Activated naive CD4-positive, alpha-beta T cell treated with anti-CD3 and anti-CD28 coated beads, Interleukin-2, amount 10 ng/mL, durations not matched to agents 7 days and 5 days (primary cell): ENCODE measurements at regions of chr6 and their contacts with region 1.

Region 1: GRCh38 chr6:154928325-154928922 is 66.7 kb upstream of the TIAM2 start:
- DNase-seq: peak; percentile 78
- H3K4me3 Mint-ChIP-seq: no peak overlapping the region
- H3K27ac Mint-ChIP-seq: no peak overlapping the region
- H3K4me1 Mint-ChIP-seq: peaks cover 6% of the 10 kb centered on the region
- H3K27me3 Mint-ChIP-seq: no peaks in the 10 kb centered on the region

Region 2: DNA sequence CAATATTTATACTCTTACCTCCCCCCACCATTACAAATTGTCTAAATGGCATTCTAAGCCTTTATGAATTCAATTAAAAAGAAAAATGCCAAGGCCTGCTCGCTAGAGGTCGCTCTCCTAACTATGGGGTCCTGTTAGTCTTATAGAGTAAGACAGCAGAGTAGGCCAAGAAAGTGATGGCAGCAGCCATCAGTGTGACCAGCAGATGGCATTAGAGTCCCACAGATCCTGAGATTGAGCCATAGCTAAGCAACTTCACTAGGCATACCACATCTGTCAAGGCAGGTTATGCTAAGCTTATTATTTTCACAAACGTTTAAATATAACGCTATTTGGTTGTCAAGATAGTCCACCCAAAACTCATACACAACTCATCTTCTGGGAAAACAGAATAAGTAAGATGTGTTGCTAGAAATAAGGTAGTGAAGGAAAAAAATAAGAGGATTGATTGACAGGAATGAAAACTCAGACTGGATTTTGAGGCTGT is 252.8 kb before region 1 on chr6:
- CTCF ChIA-PET with region 1: interaction called, 23 read pairs
- DNase-seq: peak; percentile 93
- H3K4me3 Mint-ChIP-seq: no peak overlapping the region
- H3K27ac Mint-ChIP-seq: no peak overlapping the region
- H3K4me1 Mint-ChIP-seq: no peaks in the 10 kb centered on the region
- H3K27me3 Mint-ChIP-seq: peaks cover 5% of the 10 kb centered on the region

Region 3: DNA sequence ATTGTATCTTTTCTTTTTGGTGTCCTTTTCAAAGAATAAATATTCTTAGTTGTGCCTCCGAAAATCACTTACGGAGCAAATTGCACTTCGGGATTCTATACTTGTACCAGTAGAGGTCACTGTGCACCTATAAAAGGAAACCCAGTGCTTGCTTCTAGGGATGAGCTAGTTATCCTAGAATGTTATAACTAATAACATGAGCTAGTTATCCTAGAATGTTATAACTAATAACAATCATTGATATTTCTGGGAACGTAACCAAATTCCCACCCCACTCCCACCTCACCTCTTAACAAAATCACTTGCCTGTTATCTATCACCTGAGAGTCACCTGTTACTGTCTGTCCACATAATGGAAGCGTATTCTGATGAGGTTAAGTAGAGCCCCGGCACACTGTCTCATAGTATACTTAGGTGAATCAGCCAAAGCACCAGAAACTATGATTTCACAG is 60.3 kb before region 1 on chr6:
- CTCF ChIA-PET with region 1: interaction called, 10 read pairs
- DNase-seq: no peak
- H3K4me3 Mint-ChIP-seq: no peak overlapping the region
- H3K27ac Mint-ChIP-seq: no peak overlapping the region
- H3K4me1 Mint-ChIP-seq: peaks cover 10% of the 10 kb centered on the region
- H3K27me3 Mint-ChIP-seq: no peaks in the 10 kb centered on the region

Region 4: GRCh38 chr6:154951345-154952200 is 23.1 kb after region 1 on chr6:
- CTCF ChIA-PET with region 1: interaction called, 10 read pairs
- DNase-seq: peak; percentile 49
- H3K4me3 Mint-ChIP-seq: no peak overlapping the region
- H3K27ac Mint-ChIP-seq: peak overlapping the region; percentile 73
- H3K4me1 Mint-ChIP-seq: peaks cover 24% of the 10 kb centered on the region
- H3K27me3 Mint-ChIP-seq: no peaks in the 10 kb centered on the region

Region 5: DNA sequence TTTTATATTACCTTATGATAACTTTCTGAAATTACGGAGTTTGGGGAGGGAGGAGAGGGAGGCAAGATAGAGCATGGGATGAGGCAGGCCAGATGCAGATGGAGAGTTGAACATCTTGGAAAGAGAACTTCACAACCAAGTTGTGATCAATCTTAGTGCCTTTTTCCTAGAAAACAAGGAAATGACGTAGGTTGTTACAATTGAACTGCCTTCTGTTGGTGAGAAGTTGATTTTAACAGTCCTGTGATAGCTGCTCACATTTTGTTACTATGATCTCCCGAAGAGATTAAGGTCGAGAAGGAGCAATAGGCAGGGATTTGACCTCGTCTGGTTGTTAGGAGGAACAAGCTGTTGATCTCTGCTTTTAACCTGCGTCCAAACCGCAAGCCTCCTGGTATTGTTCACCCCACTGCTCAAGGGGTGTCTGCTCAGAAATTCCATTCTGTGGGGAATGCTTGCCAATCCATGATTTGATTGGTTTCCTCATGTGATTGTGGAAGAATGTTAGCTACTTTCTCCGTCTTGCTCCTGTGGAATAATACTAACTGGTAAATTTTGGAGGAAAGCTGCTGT is 101.8 kb after region 1 on chr6:
- CTCF ChIA-PET with region 1: no interaction called
- DNase-seq: no peak
- H3K4me3 Mint-ChIP-seq: no peak overlapping the region
- H3K27ac Mint-ChIP-seq: no peak overlapping the region
- H3K4me1 Mint-ChIP-seq: no peaks in the 10 kb centered on the region
- H3K27me3 Mint-ChIP-seq: no peaks in the 10 kb centered on the region

Region 6: DNA sequence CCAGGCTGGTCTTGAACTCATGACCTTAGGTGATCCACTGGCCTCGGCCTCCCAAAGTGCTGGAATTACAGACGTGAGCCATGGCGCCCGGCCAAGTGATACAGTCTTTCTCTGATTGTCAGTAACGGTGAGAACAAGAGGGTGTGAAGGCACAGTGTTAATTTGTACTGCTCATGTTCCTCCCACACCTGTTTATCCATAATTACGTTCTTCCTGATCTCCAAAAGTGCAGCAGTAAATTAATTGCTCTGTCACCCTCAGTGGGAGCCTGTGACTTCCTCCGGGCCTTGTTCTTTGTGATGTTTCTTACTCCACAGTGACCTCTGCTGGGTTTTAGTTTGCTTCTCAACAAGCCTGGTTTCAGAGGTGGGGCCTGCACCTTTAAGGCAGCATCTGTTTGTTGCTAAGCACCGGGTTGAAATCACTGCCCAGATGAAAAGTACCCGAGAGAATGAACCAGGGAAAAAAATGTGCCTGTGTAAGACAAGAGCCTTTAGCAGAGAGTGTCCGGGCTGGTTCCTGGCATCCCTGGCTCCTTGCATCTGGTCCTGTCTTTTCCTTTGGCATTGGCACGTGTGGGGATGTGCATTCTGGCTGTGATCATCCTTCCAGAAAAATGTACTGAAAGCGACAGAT is 246.3 kb after region 1 on chr6:
- CTCF ChIA-PET with region 1: interaction called, 86 read pairs
- DNase-seq: peak; percentile 76
- H3K4me3 Mint-ChIP-seq: no peak overlapping the region
- H3K27ac Mint-ChIP-seq: peak overlapping the region; percentile 47
- H3K4me1 Mint-ChIP-seq: peaks cover 52% of the 10 kb centered on the region
- H3K27me3 Mint-ChIP-seq: no peaks in the 10 kb centered on the region

Region 7: DNA sequence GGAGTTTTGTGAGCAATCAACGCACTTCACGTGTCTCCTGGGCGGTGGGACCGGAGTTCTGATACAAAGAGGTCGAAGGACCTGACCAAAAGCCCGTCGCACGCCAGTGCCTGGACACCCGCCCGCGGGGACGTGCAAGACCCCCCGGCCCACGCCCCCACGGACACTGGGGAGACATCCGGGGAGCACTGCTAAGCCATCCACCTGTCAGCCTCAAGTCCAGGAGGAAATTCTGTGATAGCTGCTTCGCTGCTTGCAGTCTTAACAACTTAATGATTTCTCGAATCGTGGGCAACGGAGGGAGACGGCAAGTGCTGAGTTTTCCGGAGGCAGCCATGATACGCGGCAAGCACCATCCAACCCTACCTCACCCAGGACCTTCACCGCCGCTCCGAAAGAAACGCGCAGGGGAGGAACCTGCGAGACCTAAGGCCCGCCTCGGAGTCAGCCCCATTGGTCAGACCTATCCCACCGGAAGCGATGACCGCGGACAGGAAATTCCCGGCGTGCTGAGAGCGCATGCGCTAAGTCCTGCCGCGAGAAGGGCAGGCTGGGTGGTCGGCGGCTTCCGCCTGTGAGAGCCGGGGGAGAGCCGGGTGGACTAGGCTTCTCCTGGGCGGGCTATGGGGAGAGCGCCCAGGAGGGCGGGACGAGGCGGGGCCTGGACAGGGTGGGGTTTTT is 385.8 kb after region 1 on chr6 and contains the start of gene TFB1M:
- CTCF ChIA-PET with region 1: interaction called, 23 read pairs
- DNase-seq: peak; percentile 99
- H3K4me3 Mint-ChIP-seq: peak within 1 kb of the TSS; percentile 98
- H3K27ac Mint-ChIP-seq: peak within 1 kb of the TSS; percentile 95
- H3K4me1 Mint-ChIP-seq: peaks cover 43% of the 10 kb centered on the region
- H3K27me3 Mint-ChIP-seq: no peaks in the 10 kb centered on the region